ENCODE measurements at regions of chr6 and their contacts with region 1.

Region 1: GRCh38 chr6:111478749-111479148 is 4.3 kb downstream of the REV3L start:
- DNase-seq: peak; percentile 70 to 77 (median 76)
- H3K4me3 ChIP-seq: no peak overlapping the region
- H3K27ac ChIP-seq: peak overlapping the region in 1 of 2 experiments; percentile 45
- H3K4me1 ChIP-seq: peaks cover 12 to 45% (median 22%) of the 10 kb centered on the region in 4 experiments
- H3K27me3 ChIP-seq: no peaks in the 10 kb centered on the region

Region 2: GRCh38 chr6:111259089-111259831 is 219.5 kb before region 1 on chr6:
- CTCF ChIA-PET with region 1: interaction called, 14 read pairs
- POLR2A ChIA-PET with region 1: no interaction called
- DNase-seq: peak; percentile 100
- H3K4me3 ChIP-seq: peak overlapping the region; percentile 58 to 91 (median 74)
- H3K27ac ChIP-seq: peak overlapping the region; percentile 90 to 96
- H3K4me1 ChIP-seq: peaks cover 0 to 17% (median 13%) of the 10 kb centered on the region in 4 experiments
- H3K27me3 ChIP-seq: no peaks in the 10 kb centered on the region

Region 3: GRCh38 chr6:111361648-111362047 is 117.1 kb before region 1 on chr6:
- CTCF ChIA-PET with region 1: interaction called, 17 read pairs
- POLR2A ChIA-PET with region 1: no interaction called
- DNase-seq: peak; percentile 30 to 42 (median 41)
- H3K4me3 ChIP-seq: no peak overlapping the region
- H3K27ac ChIP-seq: no peak overlapping the region
- H3K4me1 ChIP-seq: peaks cover 0 to 3% (median 0%) of the 10 kb centered on the region in 4 experiments
- H3K27me3 ChIP-seq: no peaks in the 10 kb centered on the region